GM12878 (cell line): ENCODE measurements at regions of chr2 and their contacts with region 1.

Region 1: GRCh38 chr2:147331790-147332419 is 512.9 kb upstream of the ACVR2A start:
- DNase-seq: no peak
- ATAC-seq: peak; percentile 82
- H3K4me3 ChIP-seq: no peak overlapping the region
- H3K27ac ChIP-seq: no peak overlapping the region
- H3K4me1 ChIP-seq: peaks cover 4% of the 10 kb centered on the region; the same call in 1 of the 2 replicates
- H3K27me3 ChIP-seq: no peaks in the 10 kb centered on the region
- CTCF ChIP-seq: peak; percentile 40 to 61 (median 58); a peak in 5 of 6 replicates
- EP300 ChIP-seq: no peak
- POLR2A ChIP-seq: no peak
- RAD21 ChIP-seq: peak; percentile 91

Region 2: DNA sequence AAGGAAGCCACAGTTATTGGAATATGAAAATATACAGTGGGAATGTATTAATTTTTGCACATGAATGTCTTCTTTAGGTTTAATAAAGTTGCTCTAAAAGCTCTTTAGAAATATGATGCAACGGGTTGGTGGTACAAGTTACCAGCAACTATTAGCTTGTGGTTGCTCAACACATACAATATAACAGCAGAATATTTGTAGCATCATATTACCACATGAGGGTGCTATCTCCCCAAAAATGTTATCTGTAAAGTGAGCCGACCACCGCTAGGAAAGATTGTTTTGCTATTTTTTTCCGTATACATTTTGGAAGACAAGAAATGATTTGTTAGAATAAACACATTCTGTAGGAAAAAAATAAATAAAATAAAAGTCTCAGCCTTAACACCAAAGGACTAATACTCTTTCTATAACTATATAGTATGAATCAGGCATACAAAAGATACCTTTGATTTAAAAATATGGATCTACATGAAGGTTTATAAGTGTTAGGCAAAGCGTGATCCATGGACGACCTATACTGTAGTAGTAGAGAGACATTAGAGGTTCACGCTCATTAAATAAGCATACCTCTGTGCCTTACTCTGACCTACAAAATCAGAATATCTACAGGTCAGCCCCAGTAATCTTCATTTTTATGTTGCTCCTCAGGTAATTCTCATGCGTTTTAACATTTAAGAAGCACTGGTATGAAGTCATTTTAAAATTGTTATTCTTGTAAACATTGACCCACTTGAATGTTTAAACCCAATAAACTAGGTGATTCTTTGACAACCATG is 597.7 kb before region 1 on chr2:
- CTCF ChIA-PET with region 1: interaction called, 10 read pairs
- POLR2A ChIA-PET with region 1: no interaction called
- RAD21 ChIA-PET with region 1: interaction called, 7 read pairs
- SMC1A ChIA-PET with region 1: interaction called, 5 read pairs
- in situ Hi-C with region 1: no loop called
- intact Hi-C with region 1: no loop called
- DNase-seq: peak; percentile 5
- ATAC-seq: peak; percentile 95
- H3K4me3 ChIP-seq: no peak overlapping the region
- H3K27ac ChIP-seq: no peak overlapping the region
- H3K4me1 ChIP-seq: no peaks in the 10 kb centered on the region
- H3K27me3 ChIP-seq: no peaks in the 10 kb centered on the region
- CTCF ChIP-seq: peak; percentile 40 to 57 (median 40); a peak in 5 of 6 replicates
- EP300 ChIP-seq: no peak
- POLR2A ChIP-seq: no peak
- RAD21 ChIP-seq: peak; percentile 50

Region 3: DNA sequence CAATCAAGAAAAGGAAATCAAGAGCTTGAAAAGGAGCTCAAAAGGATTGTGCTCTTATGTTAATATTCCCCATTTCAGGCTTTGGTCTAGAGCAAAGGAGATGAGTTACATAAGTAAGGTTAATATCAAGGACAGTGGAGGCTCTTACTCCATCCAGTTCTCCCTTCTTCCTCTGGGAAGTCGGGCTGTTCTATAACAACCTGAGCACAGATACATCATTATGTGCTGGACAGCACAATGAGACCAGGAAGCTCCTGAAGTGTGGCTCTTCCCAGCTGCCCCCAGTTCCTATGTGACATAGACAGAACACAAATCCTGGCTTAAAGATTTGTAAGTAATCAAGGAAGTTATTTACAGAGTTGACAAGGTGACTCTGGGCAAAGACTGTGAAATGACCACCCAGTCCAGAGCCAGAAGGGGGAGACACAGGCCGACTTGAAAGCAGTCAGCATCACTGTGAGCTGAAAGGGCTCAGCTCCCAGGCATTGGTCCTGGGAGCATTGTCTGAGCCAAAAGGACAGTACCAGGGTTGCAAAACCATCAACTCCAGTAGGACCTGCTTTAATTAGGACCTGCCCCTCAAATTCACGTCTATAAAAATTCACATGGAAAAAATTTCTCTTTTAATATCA is 404.7 kb before region 1 on chr2:
- CTCF ChIA-PET with region 1: interaction called, 5 read pairs
- POLR2A ChIA-PET with region 1: no interaction called
- RAD21 ChIA-PET with region 1: interaction called, 6 read pairs
- SMC1A ChIA-PET with region 1: interaction called, 9 read pairs
- in situ Hi-C with region 1: no loop called
- intact Hi-C with region 1: loop called (anchors 5 kb)
- DNase-seq: no peak
- ATAC-seq: peak; percentile 86
- H3K4me3 ChIP-seq: no peak overlapping the region
- H3K27ac ChIP-seq: no peak overlapping the region
- H3K4me1 ChIP-seq: no peaks in the 10 kb centered on the region
- H3K27me3 ChIP-seq: no peaks in the 10 kb centered on the region
- CTCF ChIP-seq: peak; percentile 33 to 71 (median 57); a peak in 5 of 6 replicates
- EP300 ChIP-seq: no peak
- POLR2A ChIP-seq: no peak
- RAD21 ChIP-seq: peak; percentile 67

Region 4: DNA sequence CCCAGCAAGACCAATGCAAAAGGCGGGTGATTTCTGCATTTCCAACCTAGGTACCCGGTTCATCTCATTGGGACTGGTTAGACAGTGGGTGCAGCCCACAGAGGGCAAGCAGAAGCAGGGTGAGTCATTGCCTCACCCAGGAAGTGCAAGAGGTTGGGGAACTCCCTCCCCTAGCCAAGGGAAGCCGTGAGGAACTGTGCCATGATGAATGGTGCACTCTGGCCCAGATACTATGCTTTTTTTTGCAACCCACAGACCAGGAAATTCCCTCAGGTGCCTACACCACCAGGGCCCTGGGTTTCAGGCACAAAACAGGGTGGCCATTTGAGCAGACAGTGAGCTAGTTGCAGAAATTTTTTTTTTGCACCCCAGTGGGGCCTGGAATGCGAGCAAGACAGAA is 149.6 kb before region 1 on chr2:
- CTCF ChIA-PET with region 1: interaction called, 4 read pairs
- POLR2A ChIA-PET with region 1: no interaction called
- RAD21 ChIA-PET with region 1: interaction called, 6 read pairs
- SMC1A ChIA-PET with region 1: interaction called, 6 read pairs
- in situ Hi-C with region 1: no loop called
- intact Hi-C with region 1: loop called (anchors 5 kb)
- DNase-seq: peak; percentile 84
- ATAC-seq: peak; percentile 92
- H3K4me3 ChIP-seq: no peak overlapping the region
- H3K27ac ChIP-seq: peak overlapping the region; percentile 85
- H3K4me1 ChIP-seq: peaks cover 16% of the 10 kb centered on the region
- H3K27me3 ChIP-seq: no peaks in the 10 kb centered on the region
- CTCF ChIP-seq: no peak
- EP300 ChIP-seq: no peak; a peak in 2 of 4 replicates
- POLR2A ChIP-seq: no peak
- RAD21 ChIP-seq: peak; percentile 18; the same call in 1 of the 2 replicates

Region 5: DNA sequence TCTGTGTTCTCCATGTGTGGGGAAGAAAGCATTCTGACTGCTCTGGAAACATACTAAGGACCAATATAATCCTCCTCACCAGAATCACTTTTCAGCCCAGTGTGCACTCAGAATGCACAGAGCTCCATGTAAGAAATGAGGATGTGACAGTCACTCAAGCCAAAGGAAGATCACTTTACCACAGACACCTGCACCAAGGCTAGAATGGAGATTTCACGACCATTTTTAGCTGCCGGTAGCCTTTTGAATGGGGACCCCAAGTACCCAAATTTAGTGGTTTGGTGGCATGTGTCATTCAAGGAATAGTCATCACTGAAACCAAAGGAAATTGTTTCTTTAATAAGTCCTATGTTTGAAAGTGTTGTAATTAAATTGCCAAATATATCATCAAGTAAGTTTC is 100.3 kb before region 1 on chr2:
- CTCF ChIA-PET with region 1: no interaction called
- POLR2A ChIA-PET with region 1: no interaction called
- RAD21 ChIA-PET with region 1: no interaction called
- SMC1A ChIA-PET with region 1: no interaction called
- in situ Hi-C with region 1: no loop called
- intact Hi-C with region 1: loop called (anchors 5 kb)
- DNase-seq: no peak
- ATAC-seq: peak; percentile 82
- H3K4me3 ChIP-seq: no peak overlapping the region
- H3K27ac ChIP-seq: no peak overlapping the region; the same call in 1 of the 2 replicates
- H3K4me1 ChIP-seq: peaks cover 9% of the 10 kb centered on the region
- H3K27me3 ChIP-seq: no peaks in the 10 kb centered on the region
- CTCF ChIP-seq: no peak
- EP300 ChIP-seq: no peak
- POLR2A ChIP-seq: no peak
- RAD21 ChIP-seq: no peak

Region 6: GRCh38 chr2:147910990-147911473 is 579.1 kb after region 1 on chr2:
- CTCF ChIA-PET with region 1: interaction called, 33 read pairs
- POLR2A ChIA-PET with region 1: no interaction called
- RAD21 ChIA-PET with region 1: interaction called, 29 read pairs
- SMC1A ChIA-PET with region 1: interaction called, 40 read pairs
- in situ Hi-C with region 1: no loop called
- intact Hi-C with region 1: loop called (anchors 1 kb)
- DNase-seq: peak; percentile 21
- ATAC-seq: peak; percentile 65
- H3K4me3 ChIP-seq: no peak overlapping the region
- H3K27ac ChIP-seq: no peak overlapping the region
- H3K4me1 ChIP-seq: no peaks in the 10 kb centered on the region; the same call in 1 of the 2 replicates
- H3K27me3 ChIP-seq: no peaks in the 10 kb centered on the region
- CTCF ChIP-seq: peak; percentile 48 to 73 (median 50); a peak in 5 of 6 replicates
- EP300 ChIP-seq: no peak
- POLR2A ChIP-seq: no peak
- RAD21 ChIP-seq: peak; percentile 92